CD14-positive monocyte (primary cell): ENCODE measurements at regions of chr16 and their contacts with region 1.

Region 1: DNA sequence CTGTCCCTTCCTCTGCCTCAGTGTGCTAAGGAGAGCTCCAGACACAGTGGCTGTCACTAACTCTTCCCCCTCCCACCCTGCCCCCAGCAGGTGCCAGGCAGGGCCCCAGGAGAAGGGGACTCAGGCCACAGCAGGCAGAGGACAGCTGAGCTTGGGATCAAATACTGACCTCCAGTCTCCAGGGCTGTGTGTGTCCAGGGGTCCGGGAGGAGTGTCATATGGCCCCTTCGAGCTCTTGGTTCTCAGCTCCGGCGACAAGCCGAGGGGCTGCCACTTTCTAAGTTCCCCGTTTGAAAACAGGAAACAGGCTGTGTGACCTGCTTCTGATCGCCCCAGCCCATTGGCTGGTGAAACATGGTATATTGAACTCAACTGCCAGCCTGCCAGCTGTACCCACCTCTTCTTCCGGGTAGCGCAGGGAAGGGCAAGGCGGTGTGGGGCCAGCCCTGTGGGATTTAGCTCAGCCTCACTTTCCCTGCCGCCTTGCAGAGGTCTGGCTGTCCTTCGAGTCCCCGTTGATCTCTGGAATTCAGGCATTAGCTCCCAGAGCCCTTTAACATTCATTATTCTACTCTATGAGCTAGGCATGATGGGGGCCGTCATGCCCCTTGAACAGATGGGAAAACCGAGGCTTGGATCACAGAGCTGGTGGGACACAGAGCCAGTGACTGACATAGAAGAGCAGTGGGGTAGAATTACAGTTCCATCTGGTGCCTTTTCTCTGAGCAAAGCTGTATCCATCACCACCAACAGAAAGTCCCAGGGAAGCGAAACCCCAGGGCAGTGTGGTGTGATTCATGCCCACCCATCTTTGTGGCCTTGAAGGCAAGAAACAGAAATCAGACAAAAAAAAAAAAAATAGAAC is at the start of gene SNX20:
- DNase-seq: peak; percentile 80 to 90 (median 86)
- H3K4me3 ChIP-seq: peak within 1 kb of the TSS; percentile 51 to 92 (median 84)
- H3K4me3 Mint-ChIP-seq: peak within 1 kb of the TSS; percentile 80 to 95
- H3K27ac ChIP-seq: peak within 1 kb of the TSS; percentile 86 to 100
- H3K27ac Mint-ChIP-seq: peak within 1 kb of the TSS; percentile 96 to 100 (median 98)
- H3K4me1 ChIP-seq: peaks cover 82 to 92% of the 10 kb centered on the region in 2 donors
- H3K4me1 Mint-ChIP-seq: peaks cover 81% of the 10 kb centered on the region
- H3K27me3 ChIP-seq: no peaks in the 10 kb centered on the region
- H3K27me3 Mint-ChIP-seq: peaks cover 0 to 6% (median 2%) of the 10 kb centered on the region in 3 donors
- CTCF ChIP-seq: no peak
- polyA plus RNA-seq, gene SNX20: 51.0 to 83.2 (median 52.0) TPM

Region 2: DNA sequence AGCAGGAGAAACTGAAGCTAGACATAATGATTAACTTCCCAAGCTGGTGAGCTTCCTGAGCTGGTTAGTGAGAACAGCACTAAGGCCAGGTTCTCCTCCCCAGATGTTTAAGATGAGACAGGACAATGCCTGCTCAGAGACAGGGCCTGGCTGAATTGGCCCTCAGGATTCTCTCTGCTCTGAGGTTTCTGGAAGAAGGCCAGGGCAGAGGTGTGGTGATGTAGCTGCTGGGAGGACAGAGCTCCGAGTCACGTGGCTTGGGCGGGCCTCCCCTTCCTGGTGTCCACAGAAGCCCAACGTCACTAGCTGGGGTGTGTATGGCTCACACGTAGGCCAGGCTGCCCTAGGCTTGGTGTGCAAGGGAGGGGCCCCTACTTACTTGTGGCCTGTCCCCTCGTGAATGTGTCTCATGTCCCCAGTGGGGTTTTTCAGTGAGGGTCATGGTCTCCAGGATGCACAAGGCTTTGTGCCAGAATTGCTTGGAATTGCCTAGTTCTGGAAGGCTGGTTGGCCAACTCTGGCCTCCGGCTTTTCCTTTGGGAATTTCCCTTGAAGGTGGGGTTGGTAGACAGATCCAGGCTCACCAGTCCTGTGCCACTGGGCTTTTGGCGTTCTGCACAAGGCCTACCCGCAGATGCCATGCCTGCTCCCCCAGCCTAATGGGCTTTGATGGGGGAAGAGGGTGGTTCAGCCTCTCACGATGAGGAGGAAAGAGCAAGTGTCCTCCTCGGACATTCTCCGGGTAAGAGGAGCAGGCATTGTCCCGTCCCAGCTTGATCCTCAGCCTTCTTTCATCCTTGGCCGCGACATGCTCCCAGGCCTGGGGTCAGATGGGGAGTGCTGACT is 15.5 kb after region 1 on chr16:
- intact Hi-C with region 1: loop called in 1 of 2 experiments (anchors 1 kb)
- DNase-seq: peak; percentile 98 to 100 (median 99)
- H3K4me3 ChIP-seq: peak overlapping the region in 2 of 3 experiments; percentile 32 to 95
- H3K4me3 Mint-ChIP-seq: peak overlapping the region; percentile 95 to 99
- H3K27ac ChIP-seq: peak overlapping the region; percentile 97 to 100
- H3K27ac Mint-ChIP-seq: peak overlapping the region; percentile 98 to 100 (median 99)
- H3K4me1 ChIP-seq: peaks cover 75 to 89% of the 10 kb centered on the region in 2 donors
- H3K4me1 Mint-ChIP-seq: peaks cover 87% of the 10 kb centered on the region
- H3K27me3 ChIP-seq: no peaks in the 10 kb centered on the region
- H3K27me3 Mint-ChIP-seq: no peaks in the 10 kb centered on the region
- CTCF ChIP-seq: no peak

Region 3: GRCh38 chr16:50711862-50712559 is 30.8 kb after region 1 on chr16:
- intact Hi-C with region 1: loop called in 1 of 2 experiments (anchors 5 kb)
- DNase-seq: no peak
- H3K4me3 ChIP-seq: peak overlapping the region in 1 of 3 experiments; percentile 44
- H3K4me3 Mint-ChIP-seq: peak overlapping the region in 1 of 2 donors; percentile 21
- H3K27ac ChIP-seq: peak overlapping the region; percentile 50 to 92
- H3K27ac Mint-ChIP-seq: peak overlapping the region; percentile 84 to 92 (median 86)
- H3K4me1 ChIP-seq: peaks cover 96 to 99% of the 10 kb centered on the region in 2 donors
- H3K4me1 Mint-ChIP-seq: peaks cover 96% of the 10 kb centered on the region
- H3K27me3 ChIP-seq: no peaks in the 10 kb centered on the region
- H3K27me3 Mint-ChIP-seq: no peaks in the 10 kb centered on the region
- CTCF ChIP-seq: no peak